Posterior vena cava (tissue), 2 donors: ENCODE measurements at regions of chr5 and their contacts with region 1.

Region 1: GRCh38 chr5:145681686-145682085 is 153.5 kb downstream of the PRELID2 start:
- DNase-seq: no peak

Region 2: DNA sequence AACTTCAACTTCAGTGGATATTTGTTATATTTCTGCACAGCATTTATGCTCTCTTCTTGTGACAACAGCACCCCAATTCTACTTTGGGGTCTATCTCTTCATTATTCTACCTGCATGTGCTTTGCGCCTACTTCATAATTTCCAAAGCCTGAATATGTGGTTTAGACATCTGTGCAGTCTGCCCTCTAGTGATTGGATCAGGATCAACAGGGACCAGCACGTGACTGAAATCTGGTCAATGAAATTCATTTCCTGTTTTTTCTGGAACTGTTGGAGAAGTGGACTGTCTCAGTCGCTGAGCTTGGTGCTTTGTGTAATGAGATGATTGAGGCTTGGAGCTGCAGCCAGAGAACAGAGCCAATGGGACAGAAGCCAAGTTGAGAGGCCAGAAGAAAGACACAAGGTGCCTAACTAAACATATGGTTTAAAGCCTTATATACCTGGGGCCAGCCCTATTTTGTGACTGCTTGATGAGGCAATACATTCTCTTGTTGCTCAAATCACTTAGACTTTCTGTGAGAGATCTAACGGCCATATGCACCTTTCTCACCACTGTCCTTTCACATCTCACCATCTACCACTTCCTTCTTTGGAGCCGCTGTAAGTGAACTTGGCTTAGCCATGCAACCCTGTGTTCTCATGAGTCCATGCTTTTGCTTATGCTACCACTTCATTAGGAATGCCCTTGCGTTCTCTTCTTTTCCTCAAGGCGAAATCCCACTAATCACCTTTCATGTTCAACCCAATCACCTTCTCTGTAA is 1265.7 kb after region 1 on chr5:
- intact Hi-C with region 1: loop called in 1 of 2 experiments (anchors 10 kb)
- DNase-seq: no peak